CD8-positive, alpha-beta T cell (primary cell): ENCODE measurements at regions of chr2 and their contacts with region 1.

Region 1: GRCh38 chr2:178414266-178415247 is 36.4 kb downstream of the PRKRA start:
- DNase-seq: peak; percentile 51 to 90 (median 75)
- ATAC-seq: peak; percentile 53
- H3K4me3 ChIP-seq: peak overlapping the region; percentile 54 to 66
- H3K4me3 Mint-ChIP-seq: peak overlapping the region; percentile 80
- H3K27ac ChIP-seq: peak overlapping the region; percentile 84 to 86
- H3K27ac Mint-ChIP-seq: peak overlapping the region; percentile 97
- H3K4me1 ChIP-seq: peaks cover 7% of the 10 kb centered on the region
- H3K4me1 Mint-ChIP-seq: peaks cover 30% of the 10 kb centered on the region
- H3K27me3 ChIP-seq: no peaks in the 10 kb centered on the region
- H3K27me3 Mint-ChIP-seq: no peaks in the 10 kb centered on the region
- CTCF ChIP-seq: peak; percentile 87

Region 2: GRCh38 chr2:178193823-178194599 is 220.5 kb before region 1 on chr2 and contains the start of gene OSBPL6:
- CTCF ChIA-PET with region 1: no interaction called
- POLR2A ChIA-PET with region 1: no interaction called
- intact Hi-C with region 1: loop called in 1 of 2 experiments (anchors 10 kb)
- DNase-seq: peak; percentile 2 to 65 (median 45)
- ATAC-seq: peak; percentile 79
- H3K4me3 ChIP-seq: peak within 1 kb of the TSS; percentile 32 to 50
- H3K4me3 Mint-ChIP-seq: peak within 1 kb of the TSS; percentile 72
- H3K27ac ChIP-seq: no peak within 1 kb of the TSS
- H3K27ac Mint-ChIP-seq: no peak within 1 kb of the TSS
- H3K4me1 ChIP-seq: peaks cover 13% of the 10 kb centered on the region
- H3K4me1 Mint-ChIP-seq: peaks cover 13% of the 10 kb centered on the region
- H3K27me3 ChIP-seq: peaks cover 8 to 10% of the 10 kb centered on the region in 2 experiments
- H3K27me3 Mint-ChIP-seq: peaks cover 50% of the 10 kb centered on the region
- CTCF ChIP-seq: no peak
- total RNA-seq, gene OSBPL6: 0.11 TPM in 1 of 2 experiments, not detected in the other

Region 3: DNA sequence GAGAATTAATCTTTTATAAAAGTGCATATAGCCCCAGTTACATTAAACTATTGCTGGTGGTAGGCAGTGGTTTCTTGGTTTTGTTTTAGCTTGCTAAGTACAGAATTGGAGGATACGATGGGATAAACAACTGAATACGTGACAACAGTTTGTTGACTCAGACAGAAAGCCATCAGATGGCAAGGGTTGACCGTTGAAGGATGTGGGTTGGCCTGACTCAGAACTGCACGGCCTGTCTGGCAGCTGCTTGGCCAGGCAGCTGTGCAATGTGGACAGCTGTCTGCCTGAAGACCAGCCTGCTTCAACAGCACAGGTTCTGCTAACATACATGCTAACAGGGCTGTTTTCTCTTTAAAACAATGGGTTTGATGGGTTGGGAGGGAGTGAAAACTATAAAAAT is 10.2 kb before region 1 on chr2:
- CTCF ChIA-PET with region 1: interaction called, 77 read pairs
- POLR2A ChIA-PET with region 1: no interaction called
- intact Hi-C with region 1: no loop called
- DNase-seq: no peak
- ATAC-seq: no peak
- H3K4me3 ChIP-seq: no peak overlapping the region
- H3K4me3 Mint-ChIP-seq: no peak overlapping the region
- H3K27ac ChIP-seq: no peak overlapping the region
- H3K27ac Mint-ChIP-seq: no peak overlapping the region
- H3K4me1 ChIP-seq: no peaks in the 10 kb centered on the region
- H3K4me1 Mint-ChIP-seq: no peaks in the 10 kb centered on the region
- H3K27me3 ChIP-seq: no peaks in the 10 kb centered on the region
- H3K27me3 Mint-ChIP-seq: peaks cover 9% of the 10 kb centered on the region
- CTCF ChIP-seq: no peak

Region 4: DNA sequence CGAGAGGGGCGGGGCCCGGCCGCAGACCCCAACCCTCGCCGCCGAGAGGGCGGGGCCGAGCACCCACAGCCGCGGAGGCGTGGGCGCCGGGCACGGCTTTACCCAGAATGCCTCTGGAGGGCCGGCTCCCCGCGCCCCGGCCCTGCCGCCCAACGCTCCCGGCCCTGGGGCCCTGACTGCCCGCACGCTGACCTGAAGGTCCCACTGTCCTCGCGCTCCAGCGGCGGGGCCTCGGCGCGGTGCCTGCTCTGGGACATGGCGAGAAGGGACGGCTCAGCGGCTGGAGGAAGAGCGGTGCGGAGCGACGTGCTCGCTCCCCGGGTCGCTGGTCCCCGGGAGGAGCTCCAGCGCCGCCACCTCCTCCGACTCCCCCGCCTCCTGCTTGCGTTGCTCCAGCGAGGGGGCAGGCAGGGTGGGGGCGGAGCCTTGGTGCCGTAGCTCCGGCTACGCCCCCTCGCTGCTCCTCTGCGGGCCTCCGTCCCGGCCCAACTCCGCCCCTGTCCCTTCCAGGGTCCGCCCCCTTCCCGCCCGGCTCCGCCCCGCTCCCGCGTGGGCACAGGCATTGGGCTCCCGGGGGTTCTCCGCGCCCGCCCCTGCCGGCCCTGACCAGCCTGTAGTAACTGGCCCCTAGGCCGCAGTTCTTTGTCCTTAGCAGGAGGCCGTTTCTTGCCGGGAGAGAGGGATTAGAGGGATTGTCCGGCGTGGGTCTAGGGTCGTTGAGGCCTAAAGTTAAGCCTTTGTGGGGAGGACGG is 36.4 kb after region 1 on chr2 and contains the starts of genes PJVK and PRKRA:
- CTCF ChIA-PET with region 1: interaction called, 24 read pairs
- POLR2A ChIA-PET with region 1: interaction called, 25 read pairs
- intact Hi-C with region 1: loop called (anchors 1 to 2 kb)
- DNase-seq: peak; percentile 89 to 98 (median 95)
- ATAC-seq: peak; percentile 92
- H3K4me3 ChIP-seq: peak within 1 kb of the TSS; percentile 73 to 93
- H3K4me3 Mint-ChIP-seq: peak within 1 kb of the TSS; percentile 90
- H3K27ac ChIP-seq: peak within 1 kb of the TSS; percentile 76 to 90
- H3K27ac Mint-ChIP-seq: peak within 1 kb of the TSS; percentile 95
- H3K4me1 ChIP-seq: peaks cover 19% of the 10 kb centered on the region
- H3K4me1 Mint-ChIP-seq: peaks cover 34% of the 10 kb centered on the region
- H3K27me3 ChIP-seq: no peaks in the 10 kb centered on the region
- H3K27me3 Mint-ChIP-seq: no peaks in the 10 kb centered on the region
- CTCF ChIP-seq: no peak
- total RNA-seq, gene PJVK: 2.9 to 5.3 TPM
- total RNA-seq, gene PRKRA: 116 to 127 TPM

Region 5: GRCh38 chr2:178522950-178523595 is 108.5 kb after region 1 on chr2:
- CTCF ChIA-PET with region 1: no interaction called
- POLR2A ChIA-PET with region 1: no interaction called
- intact Hi-C with region 1: loop called in 1 of 2 experiments (anchors 1 kb)
- DNase-seq: peak; percentile 58 to 92 (median 81)
- ATAC-seq: peak; percentile 99
- H3K4me3 ChIP-seq: peak overlapping the region; percentile 65 to 82
- H3K4me3 Mint-ChIP-seq: peak overlapping the region; percentile 94
- H3K27ac ChIP-seq: peak overlapping the region; percentile 55 to 74
- H3K27ac Mint-ChIP-seq: peak overlapping the region; percentile 90
- H3K4me1 ChIP-seq: peaks cover 10% of the 10 kb centered on the region
- H3K4me1 Mint-ChIP-seq: peaks cover 41% of the 10 kb centered on the region
- H3K27me3 ChIP-seq: no peaks in the 10 kb centered on the region
- H3K27me3 Mint-ChIP-seq: no peaks in the 10 kb centered on the region
- CTCF ChIP-seq: peak; percentile 83